ENCODE measurements at regions of chr17 and their contacts with region 1.

Region 1: GRCh38 chr17:11144358-11145233 is 96.4 kb upstream of the SHISA6 start:
- DNase-seq: peak; percentile 35

Region 2: GRCh38 chr17:10875979-10876555 is 268.5 kb before region 1 on chr17:
- CTCF ChIA-PET with region 1: interaction called, 19 read pairs
- POLR2A ChIA-PET with region 1: no interaction called
- DNase-seq: peak; percentile 61

Region 3: DNA sequence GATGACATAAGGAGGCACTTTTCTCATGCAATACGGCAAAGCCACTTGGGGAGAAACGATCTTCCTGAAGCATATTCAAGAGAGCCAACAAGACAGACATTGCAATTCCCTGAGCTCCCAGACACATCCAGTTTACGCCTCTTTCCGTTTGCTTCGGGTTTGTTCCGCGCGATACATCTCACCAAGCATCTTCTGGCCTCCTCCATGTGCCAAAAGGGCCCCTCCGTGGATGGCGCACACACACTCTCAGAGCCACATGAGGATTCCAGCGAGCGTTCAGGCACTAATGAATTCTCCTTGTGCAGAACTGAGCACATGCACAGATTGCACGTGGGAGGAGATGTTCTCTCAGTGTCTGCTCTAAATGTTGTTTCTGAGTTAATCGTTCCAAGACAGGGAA is 50.3 kb before region 1 on chr17:
- CTCF ChIA-PET with region 1: no interaction called
- POLR2A ChIA-PET with region 1: no interaction called
- DNase-seq: no peak